T-cell (primary cell): ENCODE measurements at regions of chr16 and their contacts with region 1.

Region 1: DNA sequence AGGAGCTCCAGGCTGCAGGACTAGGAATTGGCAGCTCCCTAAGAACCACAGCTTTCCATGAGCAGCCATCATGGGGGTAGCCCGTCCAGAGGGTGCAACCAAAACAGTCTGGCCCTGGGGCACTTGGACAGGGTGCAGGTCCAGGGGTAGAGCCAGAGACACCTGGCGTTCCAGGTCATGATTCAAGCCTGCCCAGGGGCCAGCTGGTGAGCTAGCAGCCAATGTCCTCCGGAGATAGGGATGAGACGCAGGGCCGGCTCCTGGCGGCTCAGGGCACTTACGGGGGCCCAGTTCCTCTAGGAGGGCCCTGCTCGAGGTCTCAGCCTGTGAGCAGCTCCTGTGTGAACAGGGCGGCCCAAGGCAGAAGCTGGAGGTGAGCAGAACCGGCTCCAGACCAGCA is 22.1 kb downstream of the PIEZO1 start:
- DNase-seq: no peak
- ATAC-seq: no peak
- H3K4me3 ChIP-seq: no peak overlapping the region
- H3K4me3 Mint-ChIP-seq: no peak overlapping the region
- H3K27ac ChIP-seq: no peak overlapping the region
- H3K27ac Mint-ChIP-seq: no peak overlapping the region
- H3K4me1 ChIP-seq: peaks cover 0 to 85% of the 10 kb centered on the region in 2 experiments
- H3K4me1 Mint-ChIP-seq: peaks cover 28 to 49% (median 41%) of the 10 kb centered on the region in 3 donors
- H3K27me3 ChIP-seq: no peaks in the 10 kb centered on the region
- H3K27me3 Mint-ChIP-seq: no peaks in the 10 kb centered on the region

Region 2: DNA sequence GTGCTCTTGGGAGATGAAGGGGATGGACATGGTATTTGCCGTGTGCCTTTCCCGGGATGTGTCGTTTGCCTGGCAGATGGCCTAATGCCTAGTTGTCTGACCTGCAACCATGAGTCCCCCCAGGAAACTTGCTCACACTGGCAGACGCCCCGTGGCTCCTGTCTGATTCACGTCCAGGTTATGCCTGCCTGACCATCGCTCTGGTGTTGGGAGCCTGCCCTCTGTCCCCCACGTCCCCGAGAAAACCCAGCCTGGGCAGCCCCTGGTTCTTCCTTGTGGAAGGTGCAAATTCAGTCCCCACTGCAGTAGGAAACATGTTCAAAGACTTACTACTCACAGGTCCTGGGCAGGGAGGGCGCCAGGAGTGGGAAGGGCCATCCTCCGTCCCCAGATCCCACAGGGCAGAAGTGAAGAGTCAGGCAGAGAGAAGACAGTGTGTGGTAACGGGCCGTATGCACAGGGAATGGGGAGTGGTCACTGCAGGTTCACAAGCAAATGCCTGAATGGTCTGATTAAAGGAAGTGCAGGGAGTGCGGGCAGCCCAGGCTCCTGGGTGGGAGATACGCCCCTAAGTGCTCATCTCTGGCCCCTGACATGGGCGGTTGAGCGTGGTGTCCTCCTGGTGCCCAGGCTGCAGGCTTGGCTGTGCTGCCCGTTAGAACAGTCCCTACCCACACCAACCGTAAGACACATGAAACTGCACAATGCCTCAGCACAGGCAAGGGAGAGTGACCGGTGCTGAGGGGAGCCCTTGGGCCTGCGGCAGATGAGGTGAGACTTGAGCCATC is 72.4 kb before region 1 on chr16:
- CTCF ChIA-PET with region 1: no interaction called
- POLR2A ChIA-PET with region 1: interaction called in 1 of 2 experiments, 10 read pairs
- DNase-seq: no peak
- ATAC-seq: no peak
- H3K4me3 ChIP-seq: no peak overlapping the region
- H3K4me3 Mint-ChIP-seq: peak overlapping the region in 2 of 3 donors; percentile 24 to 77
- H3K27ac ChIP-seq: peak overlapping the region; percentile 10
- H3K27ac Mint-ChIP-seq: peak overlapping the region; percentile 94 to 95
- H3K4me1 ChIP-seq: peaks cover 31 to 69% of the 10 kb centered on the region in 2 experiments
- H3K4me1 Mint-ChIP-seq: peaks cover 47 to 57% (median 49%) of the 10 kb centered on the region in 3 donors
- H3K27me3 ChIP-seq: peaks cover 0 to 5% of the 10 kb centered on the region in 2 experiments
- H3K27me3 Mint-ChIP-seq: peaks cover 0 to 2% of the 10 kb centered on the region in 2 donors

Region 3: GRCh38 chr16:88731699-88732098 is 31.2 kb before region 1 on chr16:
- CTCF ChIA-PET with region 1: no interaction called
- POLR2A ChIA-PET with region 1: no interaction called
- DNase-seq: no peak
- ATAC-seq: no peak
- H3K4me3 ChIP-seq: no peak overlapping the region
- H3K4me3 Mint-ChIP-seq: no peak overlapping the region
- H3K27ac ChIP-seq: no peak overlapping the region
- H3K27ac Mint-ChIP-seq: no peak overlapping the region
- H3K4me1 ChIP-seq: no peaks in the 10 kb centered on the region
- H3K4me1 Mint-ChIP-seq: peaks cover 0 to 3% (median 0%) of the 10 kb centered on the region in 3 donors
- H3K27me3 ChIP-seq: no peaks in the 10 kb centered on the region
- H3K27me3 Mint-ChIP-seq: no peaks in the 10 kb centered on the region

Region 4: GRCh38 chr16:88779406-88780141 is 16.6 kb after region 1 on chr16:
- CTCF ChIA-PET with region 1: no interaction called
- POLR2A ChIA-PET with region 1: interaction called in 1 of 2 experiments, 13 read pairs
- DNase-seq: no peak
- ATAC-seq: no peak
- H3K4me3 ChIP-seq: no peak overlapping the region
- H3K4me3 Mint-ChIP-seq: peak overlapping the region in 2 of 3 donors; percentile 66 to 74
- H3K27ac ChIP-seq: peak overlapping the region; percentile 79
- H3K27ac Mint-ChIP-seq: peak overlapping the region; percentile 91 to 96
- H3K4me1 ChIP-seq: peaks cover 31 to 77% of the 10 kb centered on the region in 2 experiments
- H3K4me1 Mint-ChIP-seq: peaks cover 51 to 68% (median 56%) of the 10 kb centered on the region in 3 donors
- H3K27me3 ChIP-seq: no peaks in the 10 kb centered on the region
- H3K27me3 Mint-ChIP-seq: no peaks in the 10 kb centered on the region